ENCODE measurements at regions of chr12 and their contacts with region 1.

Region 1: GRCh38 chr12:122471324-122472226 is 29.2 kb downstream of the ZCCHC8 start:
- DNase-seq: peak in 2 of 7 donors; percentile 14 to 52
- H3K4me3 ChIP-seq: no peak overlapping the region
- H3K27ac ChIP-seq: peak overlapping the region in 3 of 5 donors; percentile 9 to 49 (median 16)
- H3K4me1 ChIP-seq: no peaks in the 10 kb centered on the region
- H3K27me3 ChIP-seq: no peaks in the 10 kb centered on the region
- CTCF ChIP-seq: peak; percentile 63 to 89 (median 83)
- POLR2A ChIP-seq: no peak

Region 2: GRCh38 chr12:122399592-122400373 is 71.8 kb before region 1 on chr12:
- intact Hi-C with region 1: loop called in 1 of 2 experiments (anchors 10 kb)
- DNase-seq: peak; percentile 80 to 95 (median 89)
- H3K4me3 ChIP-seq: peak overlapping the region in 2 of 4 donors; percentile 6 to 28
- H3K27ac ChIP-seq: peak overlapping the region; percentile 91 to 99 (median 94)
- H3K4me1 ChIP-seq: peaks cover 24 to 40% of the 10 kb centered on the region in 2 donors
- H3K27me3 ChIP-seq: no peaks in the 10 kb centered on the region
- CTCF ChIP-seq: peak; percentile 36 to 89 (median 74)
- POLR2A ChIP-seq: no peak

Region 3: DNA sequence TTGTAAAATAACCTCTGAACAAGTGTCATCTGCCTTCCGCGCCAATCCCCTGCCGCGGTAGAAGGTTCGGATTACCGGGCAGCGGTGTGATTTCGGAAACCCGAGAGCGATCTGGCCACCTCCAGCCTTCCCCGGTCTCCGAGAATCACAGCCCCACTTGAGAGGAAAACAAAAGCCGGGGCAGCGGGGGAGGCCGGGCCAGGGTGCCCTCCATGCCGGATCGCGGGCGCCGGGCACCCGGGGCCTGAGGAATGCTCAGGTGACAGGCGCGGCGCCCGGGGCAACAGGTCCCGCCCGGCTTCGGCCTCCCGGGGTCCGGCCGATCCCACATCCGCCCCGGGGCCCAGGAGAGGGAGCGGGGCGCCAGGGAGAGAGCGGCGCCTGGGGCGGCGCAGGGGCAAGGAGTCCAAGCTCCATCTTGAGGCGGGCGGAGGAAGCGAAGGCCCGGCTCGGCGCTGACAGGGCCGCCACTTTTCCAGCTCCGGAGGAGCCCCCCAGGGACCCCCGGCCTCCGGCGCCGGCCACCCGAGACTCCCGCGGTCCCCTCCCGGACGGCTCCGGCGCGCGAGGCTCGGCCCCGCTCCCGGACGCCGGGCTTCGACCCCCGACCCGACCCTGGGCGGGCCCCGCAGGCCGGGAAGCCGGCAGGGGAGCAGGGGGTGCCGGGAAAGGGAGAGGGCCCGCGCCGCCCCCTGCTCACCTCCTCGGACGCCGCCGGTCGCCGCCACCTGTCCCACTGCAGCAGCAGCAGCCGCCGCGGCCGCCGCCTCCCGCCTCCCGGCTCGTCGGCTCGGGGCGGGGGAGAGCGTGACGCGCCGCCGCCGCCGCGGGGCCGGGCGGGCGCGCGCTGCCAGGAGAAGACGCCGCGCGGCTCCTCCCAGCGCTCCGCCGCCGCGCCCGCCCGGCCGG is 49.5 kb before region 1 on chr12 and contains the start of gene CLIP1:
- intact Hi-C with region 1: loop called in 1 of 2 experiments (anchors 10 kb)
- DNase-seq: peak; percentile 64 to 77 (median 70)
- H3K4me3 ChIP-seq: peak within 1 kb of the TSS; percentile 13 to 99 (median 61)
- H3K27ac ChIP-seq: peak within 1 kb of the TSS; percentile 95 to 100 (median 98)
- H3K4me1 ChIP-seq: peaks cover 19 to 48% of the 10 kb centered on the region in 2 donors
- H3K27me3 ChIP-seq: no peaks in the 10 kb centered on the region
- CTCF ChIP-seq: peak in 5 of 6 experiments; percentile 13 to 41 (median 24)
- POLR2A ChIP-seq: peak; percentile 78 to 82
- total RNA-seq, gene CLIP1: 50.8 to 134 (median 92.5) TPM